ENCODE measurements at regions of chrX and their contacts with region 1.

Region 1: DNA sequence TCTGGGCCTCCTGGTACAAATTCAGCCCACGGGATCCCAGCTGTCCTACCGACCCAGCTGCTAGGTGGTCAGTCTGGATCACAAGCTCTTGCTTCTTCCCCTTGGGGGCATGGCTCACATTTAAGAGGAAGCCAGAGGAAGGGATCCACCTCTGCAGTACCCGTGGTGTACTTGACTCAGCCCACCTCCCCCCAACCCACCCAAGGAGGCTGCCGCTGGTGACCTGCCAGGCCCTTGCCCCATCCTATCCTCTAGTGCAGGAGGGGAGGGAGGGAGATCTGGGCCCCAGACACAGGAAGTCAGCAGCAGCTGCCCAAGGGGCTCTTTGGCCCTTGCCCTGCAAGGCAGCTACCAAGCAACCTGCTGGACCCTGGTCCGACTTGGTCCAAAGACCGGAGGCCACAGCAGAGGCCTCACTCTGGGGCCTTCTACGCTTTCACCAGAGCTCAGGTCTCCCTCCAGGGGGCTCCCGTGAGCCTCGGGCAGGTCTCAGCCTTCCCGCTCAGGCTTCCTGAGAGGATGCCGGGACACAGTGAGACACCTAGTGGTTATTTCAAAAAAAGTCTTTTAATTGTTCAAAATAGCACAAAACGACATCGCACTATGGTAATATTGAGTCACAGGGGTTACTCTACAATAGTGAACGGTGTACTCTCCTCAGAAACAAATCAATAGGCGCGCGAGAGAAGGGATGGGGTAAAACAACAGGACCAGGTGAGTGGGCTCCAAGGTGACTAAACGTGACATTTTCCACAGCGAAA is 2.7 kb upstream of the RENBP start:
- DNase-seq: peak; percentile 62 to 89 (median 74)
- ATAC-seq: peak; percentile 89
- H3K4me3 ChIP-seq: no peak overlapping the region
- H3K4me3 Mint-ChIP-seq: peak overlapping the region; percentile 39
- H3K27ac ChIP-seq: no peak overlapping the region
- H3K27ac Mint-ChIP-seq: peak overlapping the region; percentile 57
- H3K4me1 ChIP-seq: peaks cover 47% of the 10 kb centered on the region
- H3K4me1 Mint-ChIP-seq: peaks cover 10% of the 10 kb centered on the region
- H3K27me3 ChIP-seq: no peaks in the 10 kb centered on the region
- H3K27me3 Mint-ChIP-seq: no peaks in the 10 kb centered on the region
- CTCF ChIP-seq: peak; percentile 84

Region 2: DNA sequence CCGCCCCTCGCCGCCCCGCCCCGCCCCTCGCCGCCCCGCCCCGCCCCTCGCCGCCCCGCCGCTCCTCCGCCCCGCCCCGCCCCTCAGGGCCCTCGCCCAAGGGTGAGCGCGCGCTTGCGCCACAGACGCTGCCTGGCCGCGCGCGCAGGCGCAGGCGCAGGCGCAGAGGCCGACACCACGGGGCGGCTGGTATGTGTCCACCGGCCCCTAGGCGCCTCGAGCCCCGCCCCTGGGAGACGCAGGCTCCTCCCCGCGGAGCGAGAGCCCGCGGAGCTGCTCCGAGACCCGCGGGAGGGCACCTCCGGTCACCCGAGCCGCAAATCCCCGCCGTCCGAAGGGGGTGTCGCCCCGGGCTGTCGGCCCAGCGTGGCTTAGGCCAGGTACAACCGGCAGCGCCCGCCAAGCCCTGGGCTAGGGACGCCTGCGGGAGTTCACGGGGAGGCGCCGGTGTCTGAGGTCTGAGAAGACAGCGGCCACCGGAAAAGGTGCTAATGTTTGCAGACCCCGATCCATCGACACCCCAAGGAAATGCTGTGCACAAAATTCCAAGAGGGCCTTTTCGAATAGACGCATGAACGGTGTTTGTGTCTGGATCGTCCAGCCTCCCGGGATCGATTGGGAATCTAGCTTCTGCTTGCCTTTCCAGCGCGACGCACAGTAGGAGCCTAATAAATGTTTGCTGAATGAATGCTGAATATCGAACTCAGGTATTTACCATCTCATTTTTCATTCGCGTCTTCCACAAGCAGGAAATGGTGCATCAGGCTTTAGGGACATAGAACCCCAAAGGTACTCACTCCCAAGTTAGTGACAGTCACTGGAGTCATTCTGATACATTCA is 347.8 kb before region 1 on chrX:
- CTCF ChIA-PET with region 1: no interaction called
- POLR2A ChIA-PET with region 1: no interaction called
- intact Hi-C with region 1: no loop called
- DNase-seq: peak; percentile 66 to 94 (median 84)
- ATAC-seq: peak; percentile 81
- H3K4me3 ChIP-seq: peak overlapping the region; percentile 79
- H3K4me3 Mint-ChIP-seq: peak overlapping the region; percentile 90
- H3K27ac ChIP-seq: peak overlapping the region in 1 of 2 donors; percentile 34
- H3K27ac Mint-ChIP-seq: peak overlapping the region; percentile 50
- H3K4me1 ChIP-seq: peaks cover 51% of the 10 kb centered on the region
- H3K4me1 Mint-ChIP-seq: peaks cover 45% of the 10 kb centered on the region
- H3K27me3 ChIP-seq: no peaks in the 10 kb centered on the region
- H3K27me3 Mint-ChIP-seq: no peaks in the 10 kb centered on the region
- CTCF ChIP-seq: no peak

Region 3: GRCh38 chrX:153934473-153935325 is 12.5 kb before region 1 on chrX and contains the start of gene NAA10:
- CTCF ChIA-PET with region 1: interaction called, 101 read pairs
- POLR2A ChIA-PET with region 1: interaction called, 12 read pairs
- intact Hi-C with region 1: no loop called
- DNase-seq: peak in 11 of 14 experiments; percentile 21 to 80 (median 55)
- ATAC-seq: peak; percentile 60
- H3K4me3 ChIP-seq: peak within 1 kb of the TSS; percentile 61
- H3K4me3 Mint-ChIP-seq: peak within 1 kb of the TSS; percentile 90
- H3K27ac ChIP-seq: peak within 1 kb of the TSS in 1 of 2 donors; percentile 7
- H3K27ac Mint-ChIP-seq: peak within 1 kb of the TSS; percentile 78
- H3K4me1 ChIP-seq: peaks cover 21% of the 10 kb centered on the region
- H3K4me1 Mint-ChIP-seq: peaks cover 27% of the 10 kb centered on the region
- H3K27me3 ChIP-seq: no peaks in the 10 kb centered on the region
- H3K27me3 Mint-ChIP-seq: no peaks in the 10 kb centered on the region
- CTCF ChIP-seq: no peak
- total RNA-seq, gene NAA10: 41.5 to 42.0 TPM

Region 4: DNA sequence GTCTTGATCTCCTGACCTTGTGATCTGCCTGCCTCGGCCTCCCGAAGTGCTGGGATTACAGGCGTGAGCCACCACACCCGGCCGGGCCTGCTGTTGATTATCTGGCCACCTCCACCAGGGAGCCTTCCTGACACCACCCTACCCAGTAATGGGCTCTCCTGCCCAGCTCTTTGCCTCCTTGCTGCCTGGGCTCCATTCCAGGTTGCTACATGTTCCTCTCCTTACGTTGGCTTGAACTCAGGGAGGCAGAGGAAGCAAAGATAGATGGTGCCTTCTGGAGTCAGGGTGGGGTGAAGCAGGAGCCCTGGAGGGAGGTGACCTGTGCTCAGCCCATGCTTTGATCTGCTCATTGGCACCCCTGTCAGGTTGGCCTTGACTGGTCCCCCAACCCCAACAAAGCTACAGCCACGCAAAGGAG is 400.9 kb after region 1 on chrX:
- CTCF ChIA-PET with region 1: no interaction called
- POLR2A ChIA-PET with region 1: no interaction called
- intact Hi-C with region 1: no loop called
- DNase-seq: peak in 1 of 14 experiments; percentile 31
- ATAC-seq: no peak
- H3K4me3 ChIP-seq: no peak overlapping the region
- H3K4me3 Mint-ChIP-seq: no peak overlapping the region
- H3K27ac ChIP-seq: peak overlapping the region in 1 of 2 donors; percentile 47
- H3K27ac Mint-ChIP-seq: peak overlapping the region; percentile 85
- H3K4me1 ChIP-seq: peaks cover 60% of the 10 kb centered on the region
- H3K4me1 Mint-ChIP-seq: peaks cover 27% of the 10 kb centered on the region
- H3K27me3 ChIP-seq: no peaks in the 10 kb centered on the region
- H3K27me3 Mint-ChIP-seq: no peaks in the 10 kb centered on the region
- CTCF ChIP-seq: no peak